ENCODE measurements at regions of chr16 and their contacts with region 1.

Region 1: GRCh38 chr16:67521095-67521804 is 7.4 kb upstream of the RIPOR1 start:
- DNase-seq: peak; percentile 92 to 98 (median 96)
- ATAC-seq: peak; percentile 91
- H3K4me3 ChIP-seq: peak overlapping the region; percentile 58 to 80
- H3K4me3 Mint-ChIP-seq: peak overlapping the region; percentile 92
- H3K27ac ChIP-seq: peak overlapping the region; percentile 65 to 95
- H3K27ac Mint-ChIP-seq: peak overlapping the region; percentile 96
- H3K4me1 ChIP-seq: peaks cover 15% of the 10 kb centered on the region
- H3K4me1 Mint-ChIP-seq: peaks cover 34% of the 10 kb centered on the region
- H3K27me3 ChIP-seq: no peaks in the 10 kb centered on the region
- H3K27me3 Mint-ChIP-seq: no peaks in the 10 kb centered on the region
- CTCF ChIP-seq: peak; percentile 89

Region 2: DNA sequence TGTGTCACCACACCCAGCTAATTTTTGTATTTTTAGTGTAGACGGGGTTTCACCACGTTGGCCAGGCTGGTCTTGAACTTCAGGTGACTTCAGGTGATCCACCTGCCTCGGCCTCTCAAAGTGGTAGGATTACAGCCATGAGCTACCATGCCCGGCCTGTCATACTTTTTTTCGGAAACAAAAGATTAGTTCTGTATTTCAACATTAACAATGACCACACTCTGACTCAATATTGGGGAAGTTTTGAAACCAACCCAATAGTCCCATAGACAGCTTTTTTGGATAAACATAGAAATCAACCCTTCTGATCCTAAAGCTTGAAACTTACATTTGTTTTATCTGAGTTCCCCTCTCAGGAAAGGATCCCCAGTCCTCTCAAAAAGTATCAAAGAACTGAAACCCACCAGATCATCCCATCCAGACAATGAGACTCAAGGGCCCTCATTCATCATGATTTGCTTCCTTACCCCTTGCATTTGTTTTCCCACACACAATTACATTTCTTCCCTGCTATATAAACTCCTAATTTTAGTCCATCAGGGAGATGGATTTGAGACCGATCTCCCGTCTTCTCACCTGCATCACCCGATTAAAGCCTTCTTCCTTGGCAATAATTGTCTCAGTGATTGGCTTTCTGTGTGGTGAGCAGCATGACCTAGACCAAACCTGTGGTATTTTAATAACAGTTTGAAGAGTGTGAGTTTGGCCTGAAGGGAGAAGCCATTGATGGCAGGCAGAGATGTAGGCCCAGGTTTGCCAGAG is 30.7 kb before region 1 on chr16:
- CTCF ChIA-PET with region 1: interaction called, 355 read pairs
- POLR2A ChIA-PET with region 1: interaction called, 3 read pairs
- intact Hi-C with region 1: no loop called
- DNase-seq: no peak
- ATAC-seq: no peak
- H3K4me3 ChIP-seq: no peak overlapping the region
- H3K4me3 Mint-ChIP-seq: no peak overlapping the region
- H3K27ac ChIP-seq: no peak overlapping the region
- H3K27ac Mint-ChIP-seq: no peak overlapping the region
- H3K4me1 ChIP-seq: no peaks in the 10 kb centered on the region
- H3K4me1 Mint-ChIP-seq: peaks cover 10% of the 10 kb centered on the region
- H3K27me3 ChIP-seq: no peaks in the 10 kb centered on the region
- H3K27me3 Mint-ChIP-seq: no peaks in the 10 kb centered on the region
- CTCF ChIP-seq: no peak

Region 3: GRCh38 chr16:67537270-67537635 is 16.0 kb after region 1 on chr16:
- CTCF ChIA-PET with region 1: interaction called, 123 read pairs
- POLR2A ChIA-PET with region 1: interaction called, 14 read pairs
- intact Hi-C with region 1: loop called (anchors 1 to 2 kb)
- DNase-seq: peak in 6 of 9 experiments; percentile 38 to 77 (median 58)
- ATAC-seq: peak; percentile 51
- H3K4me3 ChIP-seq: peak overlapping the region; percentile 83 to 85
- H3K4me3 Mint-ChIP-seq: peak overlapping the region; percentile 84
- H3K27ac ChIP-seq: peak overlapping the region; percentile 37 to 75
- H3K27ac Mint-ChIP-seq: peak overlapping the region; percentile 82
- H3K4me1 ChIP-seq: peaks cover 17% of the 10 kb centered on the region
- H3K4me1 Mint-ChIP-seq: peaks cover 33% of the 10 kb centered on the region
- H3K27me3 ChIP-seq: no peaks in the 10 kb centered on the region
- H3K27me3 Mint-ChIP-seq: no peaks in the 10 kb centered on the region
- CTCF ChIP-seq: no peak

Region 4: GRCh38 chr16:67632415-67633172 is 111.3 kb after region 1 on chr16:
- CTCF ChIA-PET with region 1: interaction called, 158 read pairs
- POLR2A ChIA-PET with region 1: no interaction called
- intact Hi-C with region 1: no loop called
- DNase-seq: no peak
- ATAC-seq: no peak
- H3K4me3 ChIP-seq: no peak overlapping the region
- H3K4me3 Mint-ChIP-seq: no peak overlapping the region
- H3K27ac ChIP-seq: no peak overlapping the region
- H3K27ac Mint-ChIP-seq: no peak overlapping the region
- H3K4me1 ChIP-seq: no peaks in the 10 kb centered on the region
- H3K4me1 Mint-ChIP-seq: no peaks in the 10 kb centered on the region
- H3K27me3 ChIP-seq: no peaks in the 10 kb centered on the region
- H3K27me3 Mint-ChIP-seq: no peaks in the 10 kb centered on the region
- CTCF ChIP-seq: no peak

Region 5: DNA sequence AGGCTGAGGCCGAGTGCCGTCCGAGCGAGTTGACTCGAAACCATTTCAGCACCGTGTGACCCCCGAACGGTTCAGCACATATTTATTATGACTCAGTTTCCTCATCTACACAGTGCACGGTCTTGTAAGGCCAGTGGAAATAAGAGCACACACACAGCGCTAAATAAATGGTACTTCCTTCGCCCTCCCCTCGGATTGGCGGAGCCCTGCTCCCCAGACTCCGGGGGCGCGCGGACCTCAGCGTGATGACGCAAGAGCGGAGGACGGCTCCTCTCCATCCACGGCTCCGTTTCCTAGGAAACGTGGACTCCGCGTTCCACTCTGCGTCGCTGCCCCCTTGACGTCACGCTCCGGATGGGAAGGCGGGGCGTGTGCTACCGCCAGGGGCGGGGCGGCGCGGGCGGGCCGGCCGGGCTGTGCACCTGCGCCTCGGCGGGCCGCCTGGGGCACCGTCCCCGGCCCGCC is 139.3 kb after region 1 on chr16 and contains the start of gene PARD6A:
- CTCF ChIA-PET with region 1: interaction called, 165 read pairs
- POLR2A ChIA-PET with region 1: interaction called, 6 read pairs
- intact Hi-C with region 1: loop called in 1 of 2 experiments (anchors 1 kb)
- DNase-seq: peak; percentile 89 to 99 (median 95)
- ATAC-seq: peak; percentile 76
- H3K4me3 ChIP-seq: peak within 1 kb of the TSS; percentile 83 to 100
- H3K4me3 Mint-ChIP-seq: peak within 1 kb of the TSS; percentile 94
- H3K27ac ChIP-seq: peak within 1 kb of the TSS; percentile 92 to 100
- H3K27ac Mint-ChIP-seq: peak within 1 kb of the TSS; percentile 93
- H3K4me1 ChIP-seq: peaks cover 20% of the 10 kb centered on the region
- H3K4me1 Mint-ChIP-seq: peaks cover 23% of the 10 kb centered on the region
- H3K27me3 ChIP-seq: no peaks in the 10 kb centered on the region
- H3K27me3 Mint-ChIP-seq: no peaks in the 10 kb centered on the region
- CTCF ChIP-seq: no peak
- total RNA-seq, gene PARD6A: 3.0 to 3.1 TPM

Region 6: DNA sequence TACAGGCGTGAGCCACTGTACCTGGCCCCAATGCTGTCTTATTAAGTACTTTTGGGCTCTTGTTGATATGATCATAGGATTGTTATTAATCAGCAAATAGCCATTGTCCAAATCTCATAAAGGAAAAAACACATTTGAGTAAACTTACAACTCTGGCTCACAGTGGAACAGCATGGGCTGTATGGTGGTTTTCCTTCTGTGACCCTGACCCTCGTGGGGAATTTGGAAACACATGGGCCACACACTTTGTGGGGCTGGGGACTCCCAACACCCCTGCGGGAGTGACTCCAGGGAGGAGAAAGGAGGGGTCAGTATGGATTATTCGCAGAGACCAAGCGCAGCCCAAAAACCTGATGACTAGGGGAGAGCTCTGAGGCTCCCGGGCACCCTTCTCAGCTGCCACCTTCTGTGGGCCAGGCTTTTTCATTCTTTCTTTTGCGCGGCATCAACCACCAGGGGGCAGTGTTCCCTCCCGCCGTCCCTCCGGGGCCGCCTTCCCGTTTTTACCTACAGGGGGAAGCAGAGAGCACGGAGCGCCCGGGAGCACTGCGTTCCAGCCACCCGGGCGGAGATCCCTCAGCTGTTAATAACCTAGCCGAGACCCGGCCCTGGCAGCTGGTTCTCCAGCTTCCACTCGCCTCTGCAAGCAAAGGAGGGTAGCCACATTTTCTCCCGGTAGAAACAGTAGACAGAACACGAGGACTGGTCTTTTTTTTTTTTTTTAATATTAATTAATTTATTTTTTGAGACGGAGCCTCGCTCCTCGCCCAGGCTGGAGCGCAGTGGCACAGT is 295.2 kb after region 1 on chr16:
- CTCF ChIA-PET with region 1: interaction called, 17 read pairs
- POLR2A ChIA-PET with region 1: interaction called, 3 read pairs
- intact Hi-C with region 1: no loop called
- DNase-seq: peak; percentile 79 to 96 (median 90)
- ATAC-seq: peak; percentile 99
- H3K4me3 ChIP-seq: no peak overlapping the region
- H3K4me3 Mint-ChIP-seq: peak overlapping the region; percentile 66
- H3K27ac ChIP-seq: no peak overlapping the region
- H3K27ac Mint-ChIP-seq: no peak overlapping the region
- H3K4me1 ChIP-seq: peaks cover 4% of the 10 kb centered on the region
- H3K4me1 Mint-ChIP-seq: peaks cover 5% of the 10 kb centered on the region
- H3K27me3 ChIP-seq: no peaks in the 10 kb centered on the region
- H3K27me3 Mint-ChIP-seq: no peaks in the 10 kb centered on the region
- CTCF ChIP-seq: peak; percentile 100

Region 7: GRCh38 chr16:68244903-68245853 is 723.9 kb after region 1 on chr16 and contains the start of gene PLA2G15:
- CTCF ChIA-PET with region 1: no interaction called
- POLR2A ChIA-PET with region 1: no interaction called
- intact Hi-C with region 1: loop called in 1 of 2 experiments (anchors 1 kb)
- DNase-seq: peak; percentile 94 to 98 (median 96)
- ATAC-seq: peak; percentile 99
- H3K4me3 ChIP-seq: peak within 1 kb of the TSS; percentile 88 to 91
- H3K4me3 Mint-ChIP-seq: peak within 1 kb of the TSS; percentile 98
- H3K27ac ChIP-seq: peak within 1 kb of the TSS in 1 of 2 experiments; percentile 38
- H3K27ac Mint-ChIP-seq: peak within 1 kb of the TSS; percentile 79
- H3K4me1 ChIP-seq: peaks cover 21% of the 10 kb centered on the region
- H3K4me1 Mint-ChIP-seq: peaks cover 26% of the 10 kb centered on the region
- H3K27me3 ChIP-seq: no peaks in the 10 kb centered on the region
- H3K27me3 Mint-ChIP-seq: no peaks in the 10 kb centered on the region
- CTCF ChIP-seq: no peak
- total RNA-seq, gene PLA2G15: 5.1 to 6.0 TPM